MCF 10A (cell line): ENCODE measurements at regions of chrX and their contacts with region 1.

Region 1: DNA sequence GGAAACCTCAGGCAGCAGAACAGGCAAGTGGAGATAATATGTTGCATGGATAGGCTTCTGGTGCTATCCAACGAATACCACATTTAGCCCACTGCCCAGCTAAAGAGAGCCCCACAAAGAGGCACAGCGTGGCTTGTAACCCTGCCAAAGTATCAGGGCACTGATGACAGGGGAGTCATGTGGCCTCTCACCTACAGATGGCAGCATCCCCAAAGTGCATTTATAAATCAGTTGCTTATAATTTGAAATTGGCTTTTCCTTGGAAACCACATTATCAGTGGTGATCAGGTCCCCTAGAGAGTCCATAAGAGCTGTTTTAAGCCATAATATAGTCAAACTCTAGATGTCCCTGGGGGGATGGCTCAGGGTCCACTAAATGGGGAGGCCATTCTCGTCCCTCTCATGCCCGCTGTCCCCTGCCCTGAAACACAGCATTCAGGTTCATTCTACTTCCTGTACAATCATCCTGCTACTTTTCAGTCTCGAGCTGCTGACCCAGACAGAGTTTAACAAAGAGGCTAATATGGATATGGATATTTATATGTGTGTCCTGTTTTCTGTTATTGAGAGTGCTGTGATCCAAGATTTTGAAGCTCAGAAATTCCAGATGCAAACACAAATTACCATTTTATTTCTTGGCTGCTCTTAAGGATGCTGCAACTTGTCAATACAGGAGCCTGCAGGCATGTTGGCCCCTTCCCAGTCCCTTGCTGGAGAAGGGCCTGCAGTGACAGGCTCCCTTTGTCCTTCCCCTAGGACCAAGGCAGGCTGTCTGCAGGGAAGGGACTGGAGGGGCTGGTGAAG is 28.5 kb downstream of the SRPX start:
- DNase-seq: peak; percentile 46
- H3K4me3 Mint-ChIP-seq: no peak overlapping the region
- H3K27ac Mint-ChIP-seq: no peak overlapping the region
- H3K4me1 Mint-ChIP-seq: no peaks in the 10 kb centered on the region
- H3K27me3 Mint-ChIP-seq: peaks cover 68% of the 10 kb centered on the region
- CTCF ChIP-seq: peak; percentile 63

Region 2: DNA sequence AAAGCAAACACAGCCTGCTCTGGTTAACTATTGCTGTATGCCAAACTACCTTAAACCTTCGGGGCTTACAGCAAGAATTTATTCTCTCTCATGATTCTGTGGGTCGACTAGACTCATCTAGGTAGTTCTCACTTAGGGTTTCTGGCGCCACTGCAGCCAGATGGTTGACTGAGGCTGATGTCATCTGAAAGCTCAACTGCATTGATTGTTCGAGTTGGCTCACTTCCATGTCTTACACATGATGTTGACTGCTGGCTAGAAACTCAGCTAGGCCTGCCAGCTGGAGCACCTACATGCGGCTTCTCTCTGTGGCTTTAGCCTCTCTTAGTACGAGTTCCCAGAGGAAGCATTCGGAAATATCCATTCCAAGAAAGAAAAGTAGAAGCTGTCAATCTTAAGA is 74.7 kb before region 1 on chrX:
- CTCF ChIA-PET with region 1: no interaction called
- POLR2A ChIA-PET with region 1: no interaction called
- intact Hi-C with region 1: no loop called
- DNase-seq: peak; percentile 36
- H3K4me3 Mint-ChIP-seq: no peak overlapping the region
- H3K27ac Mint-ChIP-seq: no peak overlapping the region
- H3K4me1 Mint-ChIP-seq: no peaks in the 10 kb centered on the region
- H3K27me3 Mint-ChIP-seq: peaks cover 38% of the 10 kb centered on the region
- CTCF ChIP-seq: no peak

Region 3: GRCh38 chrX:38175140-38175539 is 17.1 kb before region 1 on chrX:
- CTCF ChIA-PET with region 1: interaction called, 18 read pairs
- POLR2A ChIA-PET with region 1: no interaction called
- intact Hi-C with region 1: no loop called
- DNase-seq: peak; percentile 62
- H3K4me3 Mint-ChIP-seq: no peak overlapping the region
- H3K27ac Mint-ChIP-seq: peak overlapping the region; percentile 47
- H3K4me1 Mint-ChIP-seq: no peaks in the 10 kb centered on the region
- H3K27me3 Mint-ChIP-seq: peaks cover 59% of the 10 kb centered on the region
- CTCF ChIP-seq: peak; percentile 82

Region 4: GRCh38 chrX:38304010-38304409 is 111.8 kb after region 1 on chrX:
- CTCF ChIA-PET with region 1: interaction called, 5 read pairs
- POLR2A ChIA-PET with region 1: no interaction called
- intact Hi-C with region 1: loop called (anchors 1 kb)
- DNase-seq: peak; percentile 47
- H3K4me3 Mint-ChIP-seq: no peak overlapping the region
- H3K27ac Mint-ChIP-seq: peak overlapping the region; percentile 39
- H3K4me1 Mint-ChIP-seq: peaks cover 6% of the 10 kb centered on the region
- H3K27me3 Mint-ChIP-seq: peaks cover 46% of the 10 kb centered on the region
- CTCF ChIP-seq: peak; percentile 30

Region 5: DNA sequence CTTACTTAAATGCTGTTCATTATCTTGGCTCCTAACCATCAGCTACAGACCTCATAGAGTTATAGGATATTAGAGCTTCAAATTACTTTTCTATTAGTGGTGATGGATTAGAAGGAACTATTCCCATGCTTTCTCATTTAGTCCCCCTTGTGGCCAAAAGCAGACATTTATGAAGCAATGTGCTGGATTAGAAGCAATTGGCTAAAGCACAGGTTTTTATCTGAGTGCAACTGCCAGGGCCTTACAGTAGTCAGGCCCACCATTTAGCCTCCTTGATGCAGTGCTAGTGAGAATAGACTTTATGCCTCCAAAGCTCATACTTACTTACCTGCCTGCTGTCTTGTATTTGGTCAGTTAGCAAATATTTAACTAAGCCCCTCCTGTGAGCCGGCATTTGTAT is 462.1 kb after region 1 on chrX:
- CTCF ChIA-PET with region 1: interaction called, 3 read pairs
- POLR2A ChIA-PET with region 1: no interaction called
- intact Hi-C with region 1: loop called (anchors 5 kb)
- DNase-seq: peak; percentile 54
- H3K4me3 Mint-ChIP-seq: no peak overlapping the region
- H3K27ac Mint-ChIP-seq: no peak overlapping the region
- H3K4me1 Mint-ChIP-seq: no peaks in the 10 kb centered on the region
- H3K27me3 Mint-ChIP-seq: peaks cover 58% of the 10 kb centered on the region
- CTCF ChIP-seq: peak; percentile 34